Activated naive CD4-positive, alpha-beta T cell treated with anti-CD3 and anti-CD28 coated beads for 36 hours (primary cell): ENCODE measurements at regions of chr6 and their contacts with region 1.

Region 1: GRCh38 chr6:119129148-119129967 is 50.9 kb upstream of the FAM184A start:
- DNase-seq: no peak
- H3K4me3 Mint-ChIP-seq: no peak overlapping the region
- H3K27ac Mint-ChIP-seq: no peak overlapping the region
- H3K4me1 Mint-ChIP-seq: peaks cover 5% of the 10 kb centered on the region
- H3K27me3 Mint-ChIP-seq: no peaks in the 10 kb centered on the region

Region 2: DNA sequence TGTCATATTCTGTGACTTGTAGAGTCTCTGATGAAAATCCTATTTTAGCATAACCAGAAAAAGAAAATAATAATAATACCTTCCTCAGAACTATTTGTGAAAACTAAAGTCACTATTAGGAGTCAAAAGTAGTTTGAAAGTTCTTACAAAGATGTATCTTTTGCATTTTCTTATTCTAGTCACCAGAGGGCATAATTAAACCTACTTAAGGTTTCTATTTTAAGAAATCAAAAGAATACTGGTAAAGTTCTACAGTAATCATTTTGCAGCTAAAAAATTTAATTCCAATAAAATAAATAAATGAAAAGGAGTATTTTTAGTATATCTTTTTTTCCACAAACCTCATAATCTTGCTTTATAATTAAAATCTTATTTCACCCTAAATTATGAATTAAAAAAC is 166.4 kb before region 1 on chr6:
- CTCF ChIA-PET with region 1: interaction called, 14 read pairs
- intact Hi-C with region 1: loop called (anchors 1 kb)
- DNase-seq: no peak
- H3K4me3 Mint-ChIP-seq: no peak overlapping the region
- H3K27ac Mint-ChIP-seq: no peak overlapping the region
- H3K4me1 Mint-ChIP-seq: peaks cover 4% of the 10 kb centered on the region
- H3K27me3 Mint-ChIP-seq: no peaks in the 10 kb centered on the region

Region 3: GRCh38 chr6:118968416-118968815 is 160.9 kb before region 1 on chr6:
- CTCF ChIA-PET with region 1: interaction called, 14 read pairs
- intact Hi-C with region 1: loop called (anchors 1 kb)
- DNase-seq: no peak
- H3K4me3 Mint-ChIP-seq: no peak overlapping the region
- H3K27ac Mint-ChIP-seq: no peak overlapping the region
- H3K4me1 Mint-ChIP-seq: no peaks in the 10 kb centered on the region
- H3K27me3 Mint-ChIP-seq: no peaks in the 10 kb centered on the region

Region 4: DNA sequence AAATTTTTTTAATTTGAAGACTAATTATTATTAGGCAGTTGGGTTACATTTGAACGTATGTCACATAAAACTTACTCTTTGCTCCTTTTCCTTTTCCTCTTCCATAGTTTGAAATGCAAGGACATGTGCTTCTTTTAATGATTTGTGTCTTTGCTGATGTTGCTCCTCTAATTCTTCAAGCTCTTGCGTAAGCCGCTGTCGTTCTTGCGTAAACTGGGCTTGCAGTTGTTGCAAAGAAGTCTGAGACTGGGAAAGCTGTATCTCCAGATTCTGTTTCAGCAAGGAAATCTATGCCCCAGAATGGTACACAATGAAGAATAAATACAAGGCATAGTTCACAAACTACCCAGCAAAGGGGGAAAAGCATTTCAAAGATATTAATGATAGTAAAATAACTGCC is 149.3 kb before region 1 on chr6:
- CTCF ChIA-PET with region 1: no interaction called
- intact Hi-C with region 1: no loop called
- DNase-seq: no peak
- H3K4me3 Mint-ChIP-seq: no peak overlapping the region
- H3K27ac Mint-ChIP-seq: no peak overlapping the region
- H3K4me1 Mint-ChIP-seq: no peaks in the 10 kb centered on the region
- H3K27me3 Mint-ChIP-seq: no peaks in the 10 kb centered on the region

Region 5: GRCh38 chr6:119379809-119380208 is 250.5 kb after region 1 on chr6:
- CTCF ChIA-PET with region 1: no interaction called
- intact Hi-C with region 1: no loop called
- DNase-seq: no peak
- H3K4me3 Mint-ChIP-seq: no peak overlapping the region
- H3K27ac Mint-ChIP-seq: no peak overlapping the region
- H3K4me1 Mint-ChIP-seq: no peaks in the 10 kb centered on the region
- H3K27me3 Mint-ChIP-seq: no peaks in the 10 kb centered on the region

Region 6: DNA sequence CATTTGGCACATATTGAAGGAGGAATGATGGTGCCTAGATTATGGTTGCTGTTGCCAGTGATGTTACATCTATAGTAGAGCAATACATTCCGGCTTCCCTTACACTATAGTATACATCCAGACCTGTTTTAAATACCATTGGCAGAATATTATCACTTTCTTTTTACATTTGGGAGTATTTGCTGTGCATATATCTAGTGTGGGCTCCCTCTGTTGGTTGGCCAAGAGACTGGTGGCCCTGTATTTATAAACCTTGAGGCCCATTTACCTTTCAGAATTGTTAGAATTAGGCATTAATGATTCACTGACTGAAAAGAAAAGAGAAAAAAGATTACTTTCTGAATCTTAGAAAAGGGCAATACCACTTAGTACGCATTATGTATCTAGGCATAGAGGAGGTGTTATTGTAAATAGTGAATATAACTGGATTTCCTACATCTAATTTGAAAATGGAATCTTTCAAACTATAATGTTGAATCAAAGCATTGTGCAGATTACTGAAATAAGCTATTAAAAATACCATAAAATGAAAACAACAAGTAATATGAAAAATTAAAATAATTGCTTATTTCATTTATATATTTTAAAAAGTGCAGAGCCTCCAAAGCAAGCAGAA is 849.0 kb after region 1 on chr6:
- CTCF ChIA-PET with region 1: interaction called, 3 read pairs
- intact Hi-C with region 1: loop called (anchors 5 kb)
- DNase-seq: peak; percentile 16
- H3K4me3 Mint-ChIP-seq: no peak overlapping the region
- H3K27ac Mint-ChIP-seq: no peak overlapping the region
- H3K4me1 Mint-ChIP-seq: no peaks in the 10 kb centered on the region
- H3K27me3 Mint-ChIP-seq: no peaks in the 10 kb centered on the region

Region 7: DNA sequence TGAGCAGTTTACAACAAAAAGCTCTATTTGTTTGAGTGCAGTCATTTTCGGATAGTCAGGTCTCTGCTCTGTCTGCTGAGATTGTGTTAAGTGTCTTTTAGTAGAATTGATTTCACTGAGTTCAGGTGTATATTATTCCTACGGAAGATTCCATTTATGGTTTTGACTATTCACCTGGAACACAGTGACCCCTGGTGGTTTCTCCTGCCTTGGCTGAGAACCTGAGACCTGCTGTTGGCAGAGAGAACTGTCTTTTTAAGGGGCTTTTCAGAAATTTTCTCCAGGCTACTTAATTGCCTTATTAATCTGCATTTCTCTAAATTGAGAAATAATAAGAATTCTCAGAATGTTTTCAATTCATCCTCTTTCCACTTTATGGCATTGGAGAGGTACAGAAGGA is 1696.9 kb after region 1 on chr6:
- CTCF ChIA-PET with region 1: no interaction called
- intact Hi-C with region 1: loop called (anchors 5 kb)
- DNase-seq: peak; percentile 24
- H3K4me3 Mint-ChIP-seq: no peak overlapping the region
- H3K27ac Mint-ChIP-seq: no peak overlapping the region
- H3K4me1 Mint-ChIP-seq: no peaks in the 10 kb centered on the region
- H3K27me3 Mint-ChIP-seq: no peaks in the 10 kb centered on the region